Activated CD4-positive, alpha-beta T cell treated with anti-CD3 and anti-CD28 coated beads for 36 hours (primary cell): ENCODE measurements at regions of chr1 and their contacts with region 1.

Region 1: GRCh38 chr1:114780344-114781226 is at the start of gene SIKE1:
- DNase-seq: peak; percentile 96
- ATAC-seq: peak; percentile 100
- H3K4me3 Mint-ChIP-seq: peak within 1 kb of the TSS; percentile 100
- H3K27ac Mint-ChIP-seq: peak within 1 kb of the TSS; percentile 97
- H3K4me1 Mint-ChIP-seq: peaks cover 21% of the 10 kb centered on the region
- H3K27me3 Mint-ChIP-seq: no peaks in the 10 kb centered on the region
- total RNA-seq, gene SIKE1: 56.9 to 67.2 TPM

Region 2: DNA sequence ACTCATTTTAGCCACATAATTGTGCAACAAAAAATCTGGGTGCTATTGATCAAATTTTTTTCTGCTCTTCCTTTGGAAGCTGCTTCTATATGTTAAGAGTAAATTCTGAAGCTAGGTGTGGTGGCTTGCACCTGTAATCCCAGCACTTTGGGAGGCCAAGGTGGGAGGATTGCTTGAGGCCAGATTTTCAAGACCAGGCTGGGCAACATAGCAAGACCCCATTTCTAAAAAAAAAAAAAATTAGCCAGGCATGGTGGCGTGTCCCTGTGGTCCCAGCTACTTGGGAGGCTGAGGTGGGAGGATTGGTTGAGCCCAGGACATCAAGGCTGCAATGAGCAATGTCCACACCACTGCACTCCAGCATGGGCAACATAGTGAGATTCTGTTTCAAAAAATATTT is 944.0 kb before region 1 on chr1:
- CTCF ChIA-PET with region 1: no interaction called
- POLR2A ChIA-PET with region 1: no interaction called
- intact Hi-C with region 1: no loop called
- DNase-seq: no peak
- ATAC-seq: no peak
- H3K4me3 Mint-ChIP-seq: no peak overlapping the region
- H3K27ac Mint-ChIP-seq: no peak overlapping the region
- H3K4me1 Mint-ChIP-seq: peaks cover 4% of the 10 kb centered on the region
- H3K27me3 Mint-ChIP-seq: no peaks in the 10 kb centered on the region

Region 3: DNA sequence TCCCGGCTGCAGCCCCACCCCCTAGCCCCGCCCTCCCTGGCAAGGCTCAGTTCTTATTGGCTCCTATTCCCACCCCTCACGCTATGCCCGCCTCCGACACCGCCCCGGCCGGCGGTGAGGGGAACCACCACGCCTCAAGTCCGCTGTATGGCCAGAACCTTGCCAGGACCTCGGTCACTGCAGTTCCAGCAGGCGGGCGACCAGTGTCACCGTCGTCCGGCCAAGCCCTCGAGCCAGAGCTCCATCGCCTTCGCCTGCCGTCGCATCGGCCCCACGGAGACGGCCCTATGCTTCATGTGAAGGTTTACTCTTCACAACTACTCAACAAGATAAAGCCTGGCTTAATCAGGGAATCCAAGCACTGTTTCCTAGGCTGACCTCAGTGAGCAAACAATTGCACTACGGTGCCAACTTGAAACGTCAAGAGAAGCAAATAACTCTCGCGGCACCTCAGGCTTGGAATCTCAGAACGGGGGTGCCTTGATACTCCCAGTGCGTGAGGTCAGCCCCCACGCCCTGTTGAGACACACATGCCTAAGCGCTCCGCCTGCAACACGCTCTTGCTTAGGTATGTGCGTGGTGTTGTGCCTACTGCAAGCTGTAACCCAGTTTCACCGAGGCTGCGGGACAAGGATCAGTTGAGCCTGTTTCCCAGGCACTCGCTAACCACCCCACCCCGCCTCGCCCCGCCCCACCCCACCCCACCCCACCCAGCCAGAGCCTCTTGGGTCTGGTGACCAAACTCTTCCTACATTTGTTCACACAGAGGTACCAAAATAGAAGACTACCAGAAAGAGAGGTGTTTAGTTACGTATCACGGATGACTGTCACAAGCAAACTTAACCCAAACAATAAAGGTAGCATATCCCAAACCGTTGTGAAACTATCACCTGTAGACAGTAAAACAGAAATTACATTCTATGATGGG is 110.2 kb before region 1 on chr1:
- CTCF ChIA-PET with region 1: no interaction called
- POLR2A ChIA-PET with region 1: no interaction called
- intact Hi-C with region 1: loop called in 1 of 2 experiments (anchors 1 kb)
- DNase-seq: peak; percentile 93
- ATAC-seq: peak; percentile 97
- H3K4me3 Mint-ChIP-seq: peak overlapping the region; percentile 84
- H3K27ac Mint-ChIP-seq: peak overlapping the region; percentile 63
- H3K4me1 Mint-ChIP-seq: peaks cover 11% of the 10 kb centered on the region
- H3K27me3 Mint-ChIP-seq: peaks cover 15% of the 10 kb centered on the region

Region 4: DNA sequence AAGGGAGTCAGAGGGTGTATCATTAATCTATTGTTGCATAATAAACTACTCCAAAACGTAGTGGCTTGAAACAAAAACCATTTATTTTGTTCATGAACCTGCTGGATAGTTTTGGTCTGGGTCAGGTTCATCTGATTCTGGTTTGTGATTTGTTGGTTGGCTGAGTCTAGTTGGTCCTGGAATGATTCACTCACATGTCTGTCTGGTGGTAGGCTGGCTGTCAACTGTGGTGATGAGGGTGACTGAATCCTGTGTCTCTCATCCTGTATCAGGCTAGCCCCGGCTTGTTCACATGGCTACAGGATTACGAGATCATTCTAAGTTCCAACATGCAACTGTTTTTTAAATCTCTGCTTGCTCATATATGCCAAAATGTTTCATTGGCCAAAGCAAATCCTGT is 22.4 kb after region 1 on chr1:
- CTCF ChIA-PET with region 1: no interaction called
- POLR2A ChIA-PET with region 1: interaction called, 4 read pairs
- intact Hi-C with region 1: loop called in 1 of 2 experiments (anchors 2 kb)
- DNase-seq: no peak
- ATAC-seq: peak; percentile 42
- H3K4me3 Mint-ChIP-seq: no peak overlapping the region
- H3K27ac Mint-ChIP-seq: no peak overlapping the region
- H3K4me1 Mint-ChIP-seq: no peaks in the 10 kb centered on the region
- H3K27me3 Mint-ChIP-seq: peaks cover 19% of the 10 kb centered on the region